ENCODE measurements at regions of chr1 and their contacts with region 1.

Region 1: GRCh38 chr1:145845514-145846161 is at the start of gene NUDT17:
- DNase-seq: peak; percentile 91
- ATAC-seq: peak; percentile 72
- H3K4me3 ChIP-seq: peak within 1 kb of the TSS; percentile 57 to 85 (median 70)
- H3K4me3 Mint-ChIP-seq: no peak within 1 kb of the TSS
- H3K27ac ChIP-seq: peak within 1 kb of the TSS; percentile 73 to 76
- H3K27ac Mint-ChIP-seq: no peak within 1 kb of the TSS
- H3K4me1 ChIP-seq: peaks cover 18 to 24% of the 10 kb centered on the region in 2 donors
- H3K4me1 Mint-ChIP-seq: peaks cover 7% of the 10 kb centered on the region
- H3K27me3 ChIP-seq: no peaks in the 10 kb centered on the region
- H3K27me3 Mint-ChIP-seq: no peaks in the 10 kb centered on the region
- CTCF ChIP-seq: peak; percentile 90
- total RNA-seq, gene NUDT17: 7.1 and 7.7 TPM in 2 replicates

Region 2: DNA sequence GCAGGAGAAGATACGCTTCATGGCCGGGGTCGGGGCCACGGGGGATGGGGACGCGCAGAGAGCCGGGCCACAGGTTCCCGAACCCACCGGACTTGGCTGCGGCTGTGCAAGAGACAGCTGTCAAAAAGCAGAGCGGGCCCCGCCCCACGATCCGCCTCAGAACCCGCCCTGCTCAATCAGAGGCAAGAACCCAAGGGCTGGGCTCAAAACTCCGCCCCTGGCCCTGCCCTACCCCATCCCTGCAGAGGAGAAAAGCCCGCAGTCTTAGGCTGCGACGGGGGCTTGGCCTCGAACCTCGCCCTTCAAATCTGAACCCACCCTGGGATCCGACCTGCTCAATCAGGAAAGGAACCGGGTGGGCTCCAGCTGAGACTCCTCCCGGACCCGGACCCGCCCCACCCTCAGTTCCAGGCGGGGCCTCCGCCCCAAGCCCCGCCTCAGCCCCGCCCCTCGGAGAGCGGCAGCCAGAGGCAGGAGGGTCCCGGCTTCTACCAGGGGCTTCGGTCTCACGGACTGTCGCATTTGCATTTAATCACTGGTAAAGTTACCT is 40.2 kb after region 1 on chr1 and contains the start of gene ANKRD35:
- CTCF ChIA-PET with region 1: interaction called, 19 read pairs
- POLR2A ChIA-PET with region 1: interaction called, 4 read pairs
- intact Hi-C with region 1: loop called (anchors 5 kb)
- DNase-seq: peak; percentile 91
- ATAC-seq: peak; percentile 99
- H3K4me3 ChIP-seq: peak within 1 kb of the TSS; percentile 12 to 84 (median 63)
- H3K4me3 Mint-ChIP-seq: peak within 1 kb of the TSS; percentile 87
- H3K27ac ChIP-seq: no peak within 1 kb of the TSS
- H3K27ac Mint-ChIP-seq: peak within 1 kb of the TSS; percentile 26
- H3K4me1 ChIP-seq: peaks cover 11 to 12% of the 10 kb centered on the region in 2 donors
- H3K4me1 Mint-ChIP-seq: peaks cover 22% of the 10 kb centered on the region
- H3K27me3 ChIP-seq: peaks cover 0 to 24% (median 18%) of the 10 kb centered on the region in 4 experiments
- H3K27me3 Mint-ChIP-seq: peaks cover 29% of the 10 kb centered on the region
- CTCF ChIP-seq: no peak
- total RNA-seq, gene ANKRD35: not detected in 2 replicates

Region 3: DNA sequence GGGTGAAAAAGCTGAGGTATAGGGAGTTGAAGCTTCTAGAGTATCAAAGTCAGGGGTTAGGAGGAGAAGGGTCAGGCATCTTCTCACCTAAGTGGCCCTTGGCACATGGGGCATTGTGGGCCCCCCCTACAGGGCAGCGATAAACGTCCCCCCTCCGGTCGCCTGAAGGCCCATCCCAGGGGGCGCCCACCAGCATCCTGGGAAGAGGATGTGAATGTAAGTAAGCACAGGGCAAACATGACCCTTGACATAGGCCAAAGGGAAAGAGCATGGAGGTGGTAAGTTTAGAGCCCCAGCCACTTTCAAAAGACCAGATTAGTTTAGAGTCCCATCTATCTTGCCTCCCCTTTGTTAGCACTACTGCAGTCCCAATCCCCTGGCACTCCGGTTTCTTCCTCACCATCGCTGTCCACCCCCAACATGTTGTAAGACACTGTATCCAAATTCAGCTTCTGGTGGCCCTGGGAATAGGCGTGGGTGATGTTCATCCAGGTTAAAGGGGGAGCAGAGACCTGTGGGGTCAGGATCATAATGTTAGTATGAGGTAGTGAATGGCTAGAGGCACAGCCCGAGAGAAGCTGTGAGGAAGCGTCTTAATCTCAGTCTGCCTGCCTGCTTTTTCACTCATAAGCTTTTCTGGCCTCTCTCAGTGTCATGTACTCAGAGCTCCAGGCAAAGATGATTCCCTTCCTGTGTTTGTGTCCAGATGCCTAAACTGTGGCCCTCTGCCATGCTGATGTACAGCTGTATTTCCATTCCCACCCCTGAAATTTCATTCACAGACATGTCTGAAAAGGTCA is 61.5 kb after region 1 on chr1:
- CTCF ChIA-PET with region 1: interaction called, 107 read pairs
- POLR2A ChIA-PET with region 1: no interaction called
- intact Hi-C with region 1: loop called (anchors 1 kb)
- DNase-seq: no peak
- ATAC-seq: no peak
- H3K4me3 ChIP-seq: no peak overlapping the region
- H3K4me3 Mint-ChIP-seq: no peak overlapping the region
- H3K27ac ChIP-seq: no peak overlapping the region
- H3K27ac Mint-ChIP-seq: no peak overlapping the region
- H3K4me1 ChIP-seq: peaks cover 0 to 2% of the 10 kb centered on the region in 2 donors
- H3K4me1 Mint-ChIP-seq: peaks cover 6% of the 10 kb centered on the region
- H3K27me3 ChIP-seq: no peaks in the 10 kb centered on the region
- H3K27me3 Mint-ChIP-seq: no peaks in the 10 kb centered on the region
- CTCF ChIP-seq: no peak

Region 4: GRCh38 chr1:145927063-145927886 is 81.6 kb after region 1 on chr1 and contains the start of gene RBM8A:
- CTCF ChIA-PET with region 1: interaction called, 13 read pairs
- POLR2A ChIA-PET with region 1: interaction called, 7 read pairs
- intact Hi-C with region 1: no loop called
- DNase-seq: peak; percentile 98
- ATAC-seq: peak; percentile 98
- H3K4me3 ChIP-seq: peak within 1 kb of the TSS; percentile 71 to 95 (median 83)
- H3K4me3 Mint-ChIP-seq: peak within 1 kb of the TSS; percentile 78
- H3K27ac ChIP-seq: peak within 1 kb of the TSS; percentile 96 to 99
- H3K27ac Mint-ChIP-seq: peak within 1 kb of the TSS; percentile 81
- H3K4me1 ChIP-seq: peaks cover 18 to 30% of the 10 kb centered on the region in 2 donors
- H3K4me1 Mint-ChIP-seq: peaks cover 11% of the 10 kb centered on the region
- H3K27me3 ChIP-seq: no peaks in the 10 kb centered on the region
- H3K27me3 Mint-ChIP-seq: no peaks in the 10 kb centered on the region
- CTCF ChIP-seq: peak; percentile 81
- total RNA-seq, gene RBM8A: 134 and 137 TPM in 2 replicates

Region 5: GRCh38 chr1:146012737-146013403 is 167.2 kb after region 1 on chr1:
- CTCF ChIA-PET with region 1: interaction called, 85 read pairs
- POLR2A ChIA-PET with region 1: interaction called, 4 read pairs
- intact Hi-C with region 1: loop called (anchors 1 kb)
- DNase-seq: peak; percentile 82
- ATAC-seq: peak; percentile 51
- H3K4me3 ChIP-seq: no peak overlapping the region
- H3K4me3 Mint-ChIP-seq: no peak overlapping the region
- H3K27ac ChIP-seq: no peak overlapping the region
- H3K27ac Mint-ChIP-seq: no peak overlapping the region
- H3K4me1 ChIP-seq: peaks cover 0 to under 1% of the 10 kb centered on the region in 2 donors
- H3K4me1 Mint-ChIP-seq: peaks cover 2% of the 10 kb centered on the region
- H3K27me3 ChIP-seq: peaks cover 0 to 4% (median 0%) of the 10 kb centered on the region in 4 experiments
- H3K27me3 Mint-ChIP-seq: peaks cover 14% of the 10 kb centered on the region
- CTCF ChIP-seq: peak; percentile 95